ENCODE measurements at regions of chr9 and their contacts with region 1.

Region 1: GRCh38 chr9:129139993-129140396 is 28.8 kb downstream of the PTPA start:
- DNase-seq: peak; percentile 77
- ATAC-seq: peak; percentile 83
- H3K4me3 Mint-ChIP-seq: peak overlapping the region; percentile 81
- H3K27ac Mint-ChIP-seq: peak overlapping the region; percentile 91
- H3K4me1 Mint-ChIP-seq: peaks cover 50% of the 10 kb centered on the region
- H3K27me3 Mint-ChIP-seq: no peaks in the 10 kb centered on the region
- CTCF ChIP-seq: no peak

Region 2: DNA sequence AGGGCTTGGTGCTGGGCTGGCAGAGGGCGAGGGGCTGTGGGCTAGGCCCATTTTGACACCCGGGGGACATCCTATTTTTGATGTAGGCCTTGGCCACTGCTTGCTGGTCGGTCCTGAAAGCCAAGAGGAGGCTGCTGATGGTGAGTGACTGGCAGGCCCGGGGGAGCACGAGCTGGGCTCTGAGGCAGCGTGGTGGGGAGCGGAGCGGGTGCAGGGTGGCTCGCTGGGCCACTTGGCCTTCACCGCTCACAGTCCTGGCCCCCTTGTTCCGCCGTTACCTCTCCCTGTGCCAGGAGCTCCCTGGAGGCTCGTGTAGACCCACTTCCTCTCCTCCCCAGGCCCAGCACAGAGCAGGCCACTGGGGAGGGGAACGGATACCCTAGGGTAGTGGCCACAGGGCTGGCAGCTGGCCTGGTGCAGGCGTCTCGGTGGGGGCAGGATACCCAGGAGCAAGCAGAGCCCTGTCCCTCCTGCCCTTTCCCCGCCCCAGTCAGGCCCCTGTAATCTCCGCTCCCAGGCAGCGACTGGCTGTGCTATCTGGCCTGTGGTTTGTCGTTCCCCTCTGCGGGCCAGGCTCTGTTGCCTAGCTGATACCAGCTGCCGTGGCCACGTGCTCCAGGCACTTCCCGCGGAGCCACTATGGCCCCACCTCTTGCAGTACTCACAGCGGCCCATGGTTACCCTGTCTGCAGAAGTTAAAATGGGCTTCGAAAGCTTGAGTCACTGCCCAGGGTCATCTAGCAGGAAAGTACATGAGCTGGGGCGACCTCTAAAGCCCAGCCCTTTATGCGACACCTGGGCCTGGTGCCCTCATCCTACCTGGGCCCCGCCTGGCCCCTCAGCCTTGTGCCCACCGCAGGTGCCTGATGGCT is 70.8 kb before region 1 on chr9:
- CTCF ChIA-PET with region 1: no interaction called
- POLR2A ChIA-PET with region 1: no interaction called
- intact Hi-C with region 1: no loop called
- DNase-seq: peak; percentile 63
- ATAC-seq: peak; percentile 97
- H3K4me3 Mint-ChIP-seq: peak overlapping the region; percentile 65
- H3K27ac Mint-ChIP-seq: peak overlapping the region; percentile 93
- H3K4me1 Mint-ChIP-seq: peaks cover 26% of the 10 kb centered on the region
- H3K27me3 Mint-ChIP-seq: no peaks in the 10 kb centered on the region
- CTCF ChIP-seq: no peak

Region 3: DNA sequence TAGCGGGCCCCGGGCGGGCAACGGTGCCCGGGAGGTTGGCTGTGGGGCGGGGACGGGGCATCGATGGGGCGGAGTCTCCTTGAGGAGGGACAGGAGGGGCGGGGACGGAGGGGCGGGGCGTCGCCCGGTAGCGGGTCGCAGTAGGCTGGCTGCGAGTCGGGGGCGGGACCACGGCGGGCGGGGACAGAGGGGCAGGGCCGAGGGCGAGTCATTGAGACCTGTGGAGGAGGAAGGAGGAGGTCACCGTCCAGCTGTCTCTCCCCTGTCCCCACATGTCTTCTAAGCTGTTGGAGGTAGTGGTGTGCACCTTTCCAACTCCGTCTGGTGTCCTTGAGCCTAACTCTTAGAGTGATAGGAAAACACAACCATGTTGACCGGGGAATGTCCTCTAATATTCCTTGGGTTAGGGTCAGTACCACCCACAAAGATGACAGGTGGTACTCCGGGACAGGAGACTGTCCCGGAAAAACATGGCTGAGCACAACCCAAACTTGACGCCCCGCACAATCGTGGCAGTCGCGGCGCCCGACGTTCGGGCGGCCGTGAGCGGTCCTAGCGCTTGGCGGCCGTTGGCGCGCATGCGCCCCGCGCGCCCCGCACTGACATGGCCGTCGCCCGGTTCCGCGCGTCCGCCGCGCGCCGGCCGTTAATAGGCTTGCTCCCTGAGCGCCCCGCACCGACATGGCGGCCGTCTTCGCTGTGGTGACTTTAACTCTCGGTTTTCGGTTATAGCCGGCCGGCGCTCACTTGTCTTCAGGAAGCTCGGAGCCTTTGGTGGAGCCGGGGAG is 29.1 kb before region 1 on chr9 and contains the starts of genes CRAT and PTPA:
- CTCF ChIA-PET with region 1: interaction called, 4 read pairs
- POLR2A ChIA-PET with region 1: interaction called, 10 read pairs
- intact Hi-C with region 1: loop called (anchors 1 kb)
- DNase-seq: peak; percentile 91
- ATAC-seq: peak; percentile 88
- H3K4me3 Mint-ChIP-seq: peak within 1 kb of the TSS; percentile 95
- H3K27ac Mint-ChIP-seq: peak within 1 kb of the TSS; percentile 95
- H3K4me1 Mint-ChIP-seq: peaks cover 39% of the 10 kb centered on the region
- H3K27me3 Mint-ChIP-seq: no peaks in the 10 kb centered on the region
- CTCF ChIP-seq: no peak
- total RNA-seq, gene CRAT: 6.8 and 8.2 TPM in 2 replicates
- total RNA-seq, gene PTPA: 65.5 and 67.2 TPM in 2 replicates

Region 4: DNA sequence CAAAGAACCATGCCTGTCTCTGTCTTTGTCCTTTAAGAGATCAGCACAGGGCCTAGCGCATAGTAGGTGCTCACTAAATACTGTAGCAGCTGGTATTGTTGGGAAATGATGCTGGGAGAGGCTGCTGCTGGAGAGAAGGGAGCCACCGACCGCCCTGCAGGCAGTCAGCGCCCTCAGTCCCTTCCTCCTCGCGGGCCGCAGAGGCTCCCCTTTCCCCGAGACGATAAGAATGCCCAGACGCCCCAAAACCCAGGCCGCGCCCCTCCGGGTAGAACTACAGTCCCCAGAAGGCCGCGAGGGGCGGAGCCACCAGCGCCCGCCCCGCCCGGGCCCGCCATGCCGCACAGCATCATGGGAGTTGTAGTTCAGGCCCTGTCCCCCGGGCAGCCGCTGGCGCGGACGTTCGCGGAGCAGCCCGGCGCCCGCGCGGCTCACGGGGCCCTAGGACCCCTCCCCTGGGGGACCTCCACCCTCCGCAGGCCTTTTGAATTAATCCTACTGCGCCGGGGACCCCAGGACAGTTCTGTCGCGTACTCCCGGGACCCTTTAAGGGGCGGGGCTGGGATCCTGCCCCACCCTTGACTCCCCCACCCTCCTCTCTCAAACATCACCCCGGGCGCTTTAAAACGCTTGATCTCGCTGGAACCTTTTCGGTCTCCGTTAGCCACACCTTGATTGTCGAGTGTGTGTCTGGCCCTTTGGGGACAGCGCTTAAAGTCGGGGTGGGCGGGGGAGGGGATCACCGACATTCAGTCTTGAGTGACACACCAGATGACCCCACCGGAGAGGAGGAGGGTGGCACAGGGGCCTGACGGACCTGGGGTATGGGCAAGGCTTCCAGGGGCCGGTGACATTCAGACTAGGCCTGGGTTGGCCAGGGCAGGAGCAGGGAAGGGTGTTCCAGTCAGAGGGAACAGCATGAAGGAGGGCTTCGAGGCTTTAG is 62.9 kb after region 1 on chr9:
- CTCF ChIA-PET with region 1: no interaction called
- POLR2A ChIA-PET with region 1: no interaction called
- intact Hi-C with region 1: loop called (anchors 2 kb)
- DNase-seq: peak; percentile 93
- ATAC-seq: peak; percentile 98
- H3K4me3 Mint-ChIP-seq: peak overlapping the region; percentile 81
- H3K27ac Mint-ChIP-seq: peak overlapping the region; percentile 73
- H3K4me1 Mint-ChIP-seq: no peaks in the 10 kb centered on the region
- H3K27me3 Mint-ChIP-seq: peaks cover 6% of the 10 kb centered on the region
- CTCF ChIP-seq: no peak

Region 5: DNA sequence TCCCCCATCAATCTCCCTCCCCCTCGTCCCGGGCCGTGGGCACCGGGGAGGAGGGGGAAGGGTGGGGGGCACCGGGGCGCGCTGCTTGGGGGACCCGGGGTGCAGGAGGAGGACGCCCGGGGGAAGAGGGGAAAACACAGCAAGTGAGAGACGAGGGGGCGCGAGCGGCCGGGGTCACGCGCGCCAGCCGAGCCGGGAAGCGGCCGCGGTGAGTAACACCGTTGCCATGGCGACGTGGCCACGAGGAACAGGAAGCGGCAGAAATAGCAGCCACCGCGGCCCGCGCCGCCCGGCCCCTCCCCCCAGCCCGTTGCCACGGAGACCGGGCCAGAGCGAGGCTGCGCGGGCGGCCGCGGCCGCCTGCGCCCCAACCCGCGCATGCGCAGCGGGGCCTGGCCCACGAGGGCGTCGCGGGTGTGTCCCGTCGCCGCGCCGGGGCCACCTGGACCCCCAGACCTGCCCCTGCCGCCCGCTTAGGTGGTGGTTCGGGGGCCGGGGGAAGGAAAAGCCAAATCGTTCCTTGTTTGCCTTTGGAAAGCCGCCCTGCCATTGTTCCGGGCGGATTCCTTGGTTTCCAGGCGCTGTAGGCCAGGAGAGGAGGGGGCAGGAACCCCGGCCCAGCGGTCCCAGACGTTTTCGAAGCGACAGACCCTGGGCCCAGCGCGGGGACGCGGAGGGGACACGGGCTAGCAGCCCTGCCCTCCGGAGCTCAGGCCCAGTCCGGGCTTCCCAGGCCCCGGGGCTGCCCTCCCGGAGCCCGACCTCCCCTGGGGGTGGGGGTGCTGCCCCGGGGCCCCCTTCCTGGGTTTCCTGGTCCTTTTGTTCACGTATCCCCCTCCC is 273.8 kb after region 1 on chr9:
- CTCF ChIA-PET with region 1: no interaction called
- POLR2A ChIA-PET with region 1: interaction called, 6 read pairs
- intact Hi-C with region 1: loop called (anchors 1 kb)
- DNase-seq: peak; percentile 99
- ATAC-seq: peak; percentile 79
- H3K4me3 Mint-ChIP-seq: peak overlapping the region; percentile 85
- H3K27ac Mint-ChIP-seq: peak overlapping the region; percentile 97
- H3K4me1 Mint-ChIP-seq: peaks cover 14% of the 10 kb centered on the region
- H3K27me3 Mint-ChIP-seq: no peaks in the 10 kb centered on the region
- CTCF ChIP-seq: no peak

Region 6: DNA sequence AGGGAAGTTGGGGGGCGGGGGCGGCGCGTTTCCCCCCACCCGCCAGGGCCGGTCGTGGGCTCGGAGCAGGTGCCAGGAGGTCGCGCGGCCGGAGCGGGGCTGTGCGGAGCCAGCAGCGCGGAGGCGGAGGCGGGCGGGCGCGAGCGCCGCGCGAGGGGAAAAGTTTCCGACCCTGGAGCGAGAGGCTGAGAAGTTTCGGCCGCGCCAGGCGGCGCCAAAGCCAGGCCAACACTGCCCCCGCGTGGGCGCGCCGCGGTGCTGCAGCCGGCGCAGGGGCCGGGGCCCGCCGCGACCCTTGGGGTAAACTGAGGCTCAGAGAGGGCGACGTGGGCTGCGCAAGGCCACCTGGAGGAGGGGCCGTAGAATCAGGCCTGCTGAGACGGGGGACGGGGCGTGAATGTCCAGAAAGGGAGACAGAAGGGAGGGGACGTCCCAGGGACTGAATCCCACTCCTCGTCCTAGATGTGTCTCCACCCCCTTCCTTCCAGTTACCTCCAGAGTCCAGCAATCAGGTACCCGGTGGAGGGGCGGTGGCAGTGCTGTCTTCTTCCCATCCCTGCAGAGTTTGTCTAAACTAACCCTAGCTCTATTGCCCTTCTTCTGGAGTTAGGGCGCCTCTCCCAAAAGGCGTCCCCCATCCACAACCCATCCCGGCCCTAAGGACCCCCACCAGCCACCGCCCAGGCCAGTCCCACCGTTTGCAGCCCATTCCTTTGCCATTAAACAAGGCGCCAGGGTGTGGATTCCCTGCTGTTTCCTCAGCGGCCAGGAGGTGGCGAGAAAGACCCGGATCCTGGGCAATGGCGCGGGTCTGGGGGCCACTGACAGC is 470.7 kb after region 1 on chr9:
- CTCF ChIA-PET with region 1: interaction called, 49 read pairs
- POLR2A ChIA-PET with region 1: interaction called, 26 read pairs
- intact Hi-C with region 1: loop called (anchors 1 kb)
- DNase-seq: peak; percentile 75
- ATAC-seq: peak; percentile 82
- H3K4me3 Mint-ChIP-seq: peak overlapping the region; percentile 81
- H3K27ac Mint-ChIP-seq: peak overlapping the region; percentile 41
- H3K4me1 Mint-ChIP-seq: peaks cover 24% of the 10 kb centered on the region
- H3K27me3 Mint-ChIP-seq: peaks cover 2% of the 10 kb centered on the region
- CTCF ChIP-seq: peak; percentile 37

Region 7: GRCh38 chr9:129783516-129784361 is 643.7 kb after region 1 on chr9:
- CTCF ChIA-PET with region 1: interaction called, 4 read pairs
- POLR2A ChIA-PET with region 1: interaction called, 5 read pairs
- intact Hi-C with region 1: loop called (anchors 1 kb)
- DNase-seq: peak; percentile 46
- ATAC-seq: peak; percentile 98
- H3K4me3 Mint-ChIP-seq: no peak overlapping the region
- H3K27ac Mint-ChIP-seq: no peak overlapping the region
- H3K4me1 Mint-ChIP-seq: peaks cover 3% of the 10 kb centered on the region
- H3K27me3 Mint-ChIP-seq: peaks cover 15% of the 10 kb centered on the region
- CTCF ChIP-seq: peak; percentile 74

Measured in activated B cell treated with CpG ODN at 0.5 μM for 24 hours (primary cell).